H1 (cell line): ENCODE measurements at regions of chr2 and their contacts with region 1.

Region 1: DNA sequence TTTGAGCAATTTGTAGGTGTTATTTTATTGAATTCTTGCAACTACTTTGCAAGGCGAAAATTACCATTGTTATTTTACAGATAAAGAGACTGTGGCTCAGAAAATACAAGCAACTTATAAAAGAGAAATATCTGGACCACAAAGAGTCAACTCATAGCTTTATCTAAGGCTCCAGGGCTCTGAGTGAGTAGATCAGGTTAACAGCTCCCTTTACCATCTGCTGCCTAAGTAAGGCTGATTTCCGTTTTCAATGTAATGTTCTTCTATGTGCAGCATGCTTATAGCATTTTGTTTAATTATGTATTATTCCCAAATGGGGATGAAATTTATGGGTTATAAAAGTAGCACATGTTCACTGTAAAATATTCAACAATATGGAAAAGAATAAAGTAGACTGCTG is 299.1 kb upstream of the TNP1 start:
- DNase-seq: no peak
- H3K4me3 ChIP-seq: no peak overlapping the region
- H3K27ac ChIP-seq: no peak overlapping the region
- H3K4me1 ChIP-seq: no peaks in the 10 kb centered on the region
- H3K27me3 ChIP-seq: no peaks in the 10 kb centered on the region; a peak in 1 of 7 replicates
- CTCF ChIP-seq: no peak
- EP300 ChIP-seq: no peak
- POLR2A ChIP-seq: no peak
- RAD21 ChIP-seq: no peak

Region 2: DNA sequence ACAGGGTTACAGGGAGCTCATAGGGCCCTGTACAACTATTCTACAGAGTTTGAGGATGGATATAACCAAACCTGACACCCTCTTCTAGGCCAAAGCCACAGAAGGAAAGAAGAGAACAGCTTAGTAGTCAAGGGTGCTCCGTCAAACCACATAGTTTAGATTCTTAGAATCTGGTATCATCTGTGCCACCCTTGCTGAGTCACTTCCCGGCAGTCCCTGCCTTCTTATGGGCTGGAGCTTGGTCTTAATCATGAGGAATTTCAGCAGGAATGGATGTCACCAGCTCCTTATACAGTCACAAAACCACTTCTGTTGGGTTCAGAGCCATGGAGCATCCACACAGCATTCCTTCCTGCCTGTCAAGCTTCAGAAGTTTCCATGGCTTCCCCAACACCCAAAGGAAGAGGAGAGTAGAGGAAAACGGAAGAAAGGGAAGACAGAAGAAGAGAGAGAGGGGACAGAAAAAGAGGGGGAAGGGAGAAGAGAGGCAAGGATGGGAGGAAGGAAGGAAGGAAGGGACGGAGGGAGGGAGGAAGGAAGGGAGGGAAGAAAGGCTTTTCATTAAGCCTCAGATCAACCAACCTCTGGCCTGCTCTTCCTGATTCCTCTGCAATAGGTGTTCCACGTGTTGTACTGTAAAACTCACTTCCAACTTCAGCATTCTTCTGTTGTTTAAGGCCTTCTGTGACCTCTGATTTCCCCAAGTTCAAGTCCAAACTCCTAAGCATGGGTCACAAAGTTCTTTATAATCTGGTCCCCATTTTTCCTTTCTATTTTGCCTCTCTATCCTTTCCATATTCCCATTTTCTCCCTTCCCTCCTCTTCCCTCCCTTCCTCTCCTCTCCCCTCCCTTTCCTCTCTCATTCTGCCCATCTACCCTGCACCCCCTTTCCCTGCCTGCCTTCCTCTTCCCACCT is 52.9 kb before region 1 on chr2:
- CTCF ChIA-PET with region 1: no interaction called
- POLR2A ChIA-PET with region 1: no interaction called
- DNase-seq: peak in 1 of 2 experiments; percentile 30
- H3K4me3 ChIP-seq: no peak overlapping the region
- H3K27ac ChIP-seq: no peak overlapping the region
- H3K4me1 ChIP-seq: peaks cover 0 to 5% (median 0%) of the 10 kb centered on the region in 4 experiments; a peak in 2 of 7 replicates
- H3K27me3 ChIP-seq: no peaks in the 10 kb centered on the region
- CTCF ChIP-seq: no peak
- EP300 ChIP-seq: no peak
- POLR2A ChIP-seq: no peak
- RAD21 ChIP-seq: no peak

Region 3: DNA sequence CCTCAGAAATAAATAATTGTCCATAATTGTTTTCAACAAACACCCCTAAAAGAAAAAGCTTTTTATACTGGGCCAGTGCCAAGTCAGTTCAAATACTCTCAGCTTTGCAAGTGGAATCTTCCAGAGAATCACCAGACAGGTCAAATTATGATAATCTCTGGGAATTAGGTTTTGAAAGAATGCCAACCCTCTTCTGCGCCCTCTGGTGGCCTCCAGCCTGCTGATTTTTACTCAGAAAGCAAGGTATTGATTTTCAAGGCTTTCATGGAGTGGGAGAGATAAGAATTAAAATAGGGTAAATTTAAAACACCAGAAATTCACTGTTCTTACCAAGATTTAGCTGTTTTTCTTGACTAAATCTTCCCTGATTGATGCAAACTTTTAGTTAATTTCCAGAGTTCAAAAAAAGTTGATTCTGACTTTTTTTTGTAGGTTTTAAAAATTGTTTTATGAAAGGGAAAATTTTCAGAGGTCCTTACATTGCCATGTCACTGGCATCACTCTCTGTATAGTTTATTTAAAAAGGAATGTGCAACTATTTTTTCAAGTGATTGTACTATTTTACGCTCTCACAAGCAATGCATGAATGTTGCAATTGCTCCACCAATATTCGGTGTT is 16.2 kb before region 1 on chr2:
- CTCF ChIA-PET with region 1: interaction called, 23 read pairs
- POLR2A ChIA-PET with region 1: no interaction called
- DNase-seq: peak; percentile 10 to 82
- H3K4me3 ChIP-seq: no peak overlapping the region
- H3K27ac ChIP-seq: no peak overlapping the region
- H3K4me1 ChIP-seq: no peaks in the 10 kb centered on the region
- H3K27me3 ChIP-seq: no peaks in the 10 kb centered on the region
- CTCF ChIP-seq: peak in 2 of 3 experiments; percentile 66 to 73; a peak in 3 of 4 replicates
- EP300 ChIP-seq: no peak
- POLR2A ChIP-seq: no peak
- RAD21 ChIP-seq: peak; percentile 71 to 75